Endothelial cell of umbilical vein (primary cell): ENCODE measurements at regions of chr1 and their contacts with region 1.

Region 1: DNA sequence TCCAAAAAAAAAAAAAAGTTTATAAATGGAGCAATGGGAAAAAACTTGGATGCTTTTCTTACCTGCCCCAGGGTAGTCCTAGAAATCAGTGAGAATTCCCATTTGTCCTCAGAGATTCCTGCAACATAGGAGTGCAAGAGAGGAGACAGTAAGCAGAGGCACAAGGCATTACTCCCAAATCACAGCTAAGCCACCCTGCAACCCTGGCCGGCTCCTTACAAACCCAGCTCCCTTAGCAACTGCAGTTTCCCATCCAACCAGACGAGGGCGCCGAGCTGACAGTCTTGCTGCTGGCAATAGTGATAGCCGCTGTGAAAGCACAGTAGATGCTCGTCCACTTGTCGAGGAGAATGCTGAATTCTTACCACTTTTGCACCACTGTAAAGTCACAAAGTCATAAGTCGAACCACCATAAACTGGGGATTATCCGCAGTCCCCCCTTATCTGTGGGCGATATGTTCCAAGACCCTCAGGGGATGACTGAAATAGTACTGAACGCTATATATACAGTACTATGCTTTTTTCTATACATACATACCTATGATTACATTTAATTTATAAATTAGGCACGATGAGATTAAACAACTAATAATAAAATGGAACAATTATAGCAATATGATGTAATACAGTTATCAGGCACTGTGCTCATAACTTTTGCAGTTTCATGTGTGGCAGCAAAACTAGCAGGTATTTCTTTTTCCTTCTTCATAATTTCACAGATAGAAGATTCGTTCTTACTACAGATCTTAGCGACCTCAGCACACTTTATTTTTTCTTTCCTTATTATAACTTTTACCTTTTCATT is 6.0 kb upstream of the PITHD1 start:
- DNase-seq: peak; percentile 81
- H3K4me3 ChIP-seq: no peak overlapping the region
- H3K27ac ChIP-seq: no peak overlapping the region
- H3K4me1 ChIP-seq: peaks cover 2% of the 10 kb centered on the region
- H3K27me3 ChIP-seq: no peaks in the 10 kb centered on the region
- CTCF ChIP-seq: peak; percentile 94 to 97
- POLR2A ChIP-seq: no peak

Region 2: DNA sequence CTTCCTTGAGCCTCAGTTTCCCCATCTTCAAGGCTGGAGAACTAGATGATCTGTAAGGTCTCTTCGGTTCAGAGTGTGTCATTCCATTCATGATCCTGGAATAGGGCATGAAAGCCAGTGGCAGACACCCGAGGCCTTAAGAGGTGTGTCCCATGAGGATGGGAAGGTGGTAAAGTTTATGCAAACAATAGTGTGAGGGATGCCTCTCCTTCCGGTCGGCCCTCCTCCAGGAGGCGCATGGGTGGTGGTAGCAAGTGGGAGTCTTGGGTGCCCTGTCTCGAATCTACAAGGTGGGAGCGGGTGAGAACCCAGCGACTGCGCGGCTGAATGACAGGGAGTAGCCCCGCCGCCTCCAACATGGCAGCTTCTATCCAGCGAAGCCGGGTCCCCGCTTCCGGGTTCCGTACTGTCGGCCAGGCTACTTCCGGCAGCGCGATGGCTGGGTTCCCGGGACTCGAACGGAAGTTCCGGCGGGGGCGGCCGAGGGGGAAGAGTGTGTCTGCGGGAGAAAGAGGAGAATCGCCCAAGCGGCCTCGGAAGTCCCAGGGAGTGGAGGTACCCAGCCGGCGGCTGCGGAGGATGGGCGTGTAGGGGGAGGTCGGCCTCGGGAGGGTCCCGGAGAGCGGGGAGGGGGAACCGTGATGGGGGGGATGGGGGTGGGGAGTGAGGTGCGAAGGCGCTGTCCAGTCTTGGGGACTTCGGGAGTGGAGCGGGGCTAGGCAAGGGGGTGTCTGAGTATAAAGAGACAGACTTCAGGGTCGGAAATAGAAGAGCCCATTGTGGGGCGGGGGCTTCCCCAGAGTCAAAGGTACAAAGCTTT is 18.7 kb after region 1 on chr1 and contains the start of gene LYPLA2:
- CTCF ChIA-PET with region 1: interaction called, 22 read pairs
- POLR2A ChIA-PET with region 1: interaction called, 5 read pairs
- dilution Hi-C with region 1: no loop called
- intact Hi-C with region 1: loop called (anchors 2 kb)
- DNase-seq: peak; percentile 86
- H3K4me3 ChIP-seq: peak within 1 kb of the TSS; percentile 77 to 99 (median 95)
- H3K27ac ChIP-seq: peak within 1 kb of the TSS; percentile 92
- H3K4me1 ChIP-seq: peaks cover 22% of the 10 kb centered on the region
- H3K27me3 ChIP-seq: no peaks in the 10 kb centered on the region
- CTCF ChIP-seq: peak in 1 of 2 donors; percentile 8
- POLR2A ChIP-seq: peak; percentile 68
- total RNA-seq, gene LYPLA2: 110 TPM in 2 replicates

Region 3: GRCh38 chr1:23825076-23825761 is 53.0 kb after region 1 on chr1 and contains the start of gene HMGCL:
- CTCF ChIA-PET with region 1: interaction called, 11 read pairs
- POLR2A ChIA-PET with region 1: no interaction called
- dilution Hi-C with region 1: no loop called
- intact Hi-C with region 1: no loop called
- DNase-seq: peak; percentile 91
- H3K4me3 ChIP-seq: peak within 1 kb of the TSS; percentile 91 to 99 (median 99)
- H3K27ac ChIP-seq: peak within 1 kb of the TSS; percentile 76
- H3K4me1 ChIP-seq: peaks cover 9% of the 10 kb centered on the region
- H3K27me3 ChIP-seq: no peaks in the 10 kb centered on the region
- CTCF ChIP-seq: no peak
- POLR2A ChIP-seq: peak; percentile 95
- total RNA-seq, gene HMGCL: 23.9 and 24.2 TPM in 2 replicates

Region 4: DNA sequence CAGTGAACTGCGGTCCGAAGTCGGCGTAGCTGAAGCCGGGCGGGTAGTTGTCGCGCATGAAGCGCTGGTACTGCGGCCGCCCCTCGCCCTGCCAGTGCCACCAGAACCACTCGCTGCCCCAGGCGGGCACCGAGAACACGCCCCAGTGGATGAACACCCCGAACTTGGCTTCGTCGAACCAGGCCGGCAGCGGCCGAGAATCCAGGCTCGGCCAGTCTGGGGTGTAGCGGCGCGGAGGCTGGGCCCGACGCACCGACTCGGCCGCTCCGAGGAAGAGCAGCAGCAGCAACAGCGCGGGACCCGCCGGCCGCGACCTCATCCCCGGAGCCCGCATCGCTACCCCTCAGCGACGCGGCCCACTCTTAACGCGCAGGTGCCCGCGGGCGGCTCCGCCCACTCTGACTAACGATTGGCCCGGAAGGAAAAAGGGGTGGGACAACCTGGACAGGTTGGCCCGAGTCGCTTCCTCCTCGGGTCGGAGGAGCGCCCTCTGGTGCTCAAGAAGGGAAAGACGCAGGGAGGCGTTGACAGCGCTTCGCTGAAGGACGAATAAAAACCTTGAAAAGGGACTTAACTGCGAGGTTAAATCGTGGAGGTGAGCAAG is 95.8 kb after region 1 on chr1 and contains the start of gene FUCA1:
- CTCF ChIA-PET with region 1: interaction called, 18 read pairs
- POLR2A ChIA-PET with region 1: no interaction called
- dilution Hi-C with region 1: no loop called
- intact Hi-C with region 1: loop called (anchors 1 kb)
- DNase-seq: peak; percentile 90
- H3K4me3 ChIP-seq: peak within 1 kb of the TSS; percentile 49 to 61 (median 52)
- H3K27ac ChIP-seq: no peak within 1 kb of the TSS
- H3K4me1 ChIP-seq: peaks cover 4% of the 10 kb centered on the region
- H3K27me3 ChIP-seq: peaks cover 4 to 10% of the 10 kb centered on the region in 2 experiments
- CTCF ChIP-seq: peak; percentile 91 to 95
- POLR2A ChIP-seq: no peak
- total RNA-seq, gene FUCA1: 4.3 and 4.9 TPM in 2 replicates

Region 5: DNA sequence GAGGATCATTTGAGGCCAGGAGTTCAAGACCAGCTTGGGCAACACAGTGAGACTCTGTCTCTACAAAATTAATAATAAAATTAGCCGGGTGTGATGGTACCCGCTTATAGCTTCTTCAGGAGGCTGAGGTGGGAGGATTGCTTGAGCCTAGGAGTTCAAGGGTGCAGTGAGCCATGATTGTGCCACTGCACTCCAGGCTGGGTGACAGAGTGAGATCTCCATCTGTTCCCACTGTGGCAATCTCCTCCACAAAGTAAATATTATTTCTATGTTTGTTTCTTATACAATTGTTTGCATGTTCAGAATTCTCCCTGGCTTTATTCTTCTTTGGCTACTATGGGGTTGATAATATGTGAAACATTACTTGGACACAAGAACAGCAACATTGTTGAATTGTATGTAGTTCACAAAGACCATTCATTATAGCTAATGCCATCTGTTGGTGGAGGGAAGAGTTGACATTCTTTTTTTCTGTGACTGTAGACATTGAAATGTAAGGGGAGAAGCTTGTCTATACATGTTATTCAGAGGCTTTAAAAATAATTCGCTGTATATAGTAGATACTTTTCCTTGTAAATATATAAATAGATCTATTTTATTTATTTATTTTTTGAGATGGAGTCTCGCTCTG is 255.7 kb after region 1 on chr1:
- CTCF ChIA-PET with region 1: interaction called, 14 read pairs
- POLR2A ChIA-PET with region 1: no interaction called
- dilution Hi-C with region 1: no loop called
- intact Hi-C with region 1: no loop called
- DNase-seq: peak; percentile 70
- H3K4me3 ChIP-seq: no peak overlapping the region
- H3K27ac ChIP-seq: no peak overlapping the region
- H3K4me1 ChIP-seq: no peaks in the 10 kb centered on the region
- H3K27me3 ChIP-seq: no peaks in the 10 kb centered on the region
- CTCF ChIP-seq: peak; percentile 37 to 45
- POLR2A ChIP-seq: no peak